Activated T-helper 1 cell treated with anti-CD3 and anti-CD28 coated beads, Interleukin-12 subunit alpha, Interleukin-12 subunit beta, Interleukin-2, Interleukin-4 antibody, amounts not matched to agents 30 ng/mL and 10 ng/mL and 1 ng/mL, durations not matched to agents 14 hours and 24 hours and 36 hours (primary cell): ENCODE measurements at regions of chr10 and their contacts with region 1.

Region 1: GRCh38 chr10:62811159-62811875 is 4.8 kb downstream of the EGR2 start:
- DNase-seq: peak; percentile 71
- H3K4me3 Mint-ChIP-seq: peak overlapping the region; percentile 98
- H3K27ac Mint-ChIP-seq: peak overlapping the region; percentile 94
- H3K4me1 Mint-ChIP-seq: peaks cover 84% of the 10 kb centered on the region
- H3K27me3 Mint-ChIP-seq: peaks cover 8% of the 10 kb centered on the region

Region 2: DNA sequence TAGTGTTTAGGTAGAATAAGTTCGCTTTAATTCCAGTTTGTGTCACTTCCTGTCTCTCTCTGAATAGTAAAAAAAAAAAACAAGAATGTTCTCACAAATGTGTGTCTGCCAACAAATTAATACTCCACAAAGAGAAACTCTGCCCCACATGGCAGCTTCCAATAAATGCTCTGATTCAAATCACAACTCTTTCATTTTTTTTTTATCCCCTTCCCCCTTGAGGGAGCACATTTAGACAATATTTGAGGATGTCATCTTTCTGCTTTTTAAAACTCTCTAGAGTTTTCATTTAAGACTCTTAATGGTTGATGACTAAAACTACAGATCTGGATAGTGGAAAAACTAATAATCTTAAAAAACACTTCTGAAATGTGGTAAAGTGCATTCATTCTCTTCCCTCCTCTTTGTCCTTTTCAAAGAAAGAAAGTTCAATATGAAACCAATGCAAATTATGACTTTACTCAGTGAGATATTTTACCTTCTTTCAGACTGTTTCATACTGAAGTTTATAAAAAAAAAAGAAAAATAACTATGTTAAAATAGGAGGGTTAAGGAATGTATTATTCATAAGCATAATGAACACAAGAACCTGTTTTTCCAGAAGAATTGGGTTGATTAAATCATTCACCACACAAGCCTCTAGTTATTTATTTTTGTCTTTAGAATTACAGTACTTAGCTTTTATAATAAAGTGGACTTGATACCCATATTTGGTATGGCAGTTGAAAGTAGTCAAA is 867.5 kb before region 1 on chr10:
- intact Hi-C with region 1: loop called (anchors 5 kb)
- DNase-seq: no peak
- H3K4me3 Mint-ChIP-seq: peak overlapping the region; percentile 77
- H3K27ac Mint-ChIP-seq: peak overlapping the region; percentile 95
- H3K4me1 Mint-ChIP-seq: peaks cover 58% of the 10 kb centered on the region
- H3K27me3 Mint-ChIP-seq: no peaks in the 10 kb centered on the region

Region 3: GRCh38 chr10:62610649-62611229 is 200.6 kb before region 1 on chr10:
- intact Hi-C with region 1: loop called (anchors 1 kb)
- DNase-seq: peak; percentile 65
- H3K4me3 Mint-ChIP-seq: no peak overlapping the region
- H3K27ac Mint-ChIP-seq: peak overlapping the region; percentile 11
- H3K4me1 Mint-ChIP-seq: peaks cover 59% of the 10 kb centered on the region
- H3K27me3 Mint-ChIP-seq: peaks cover 9% of the 10 kb centered on the region

Region 4: GRCh38 chr10:62681211-62681940 is 129.9 kb before region 1 on chr10:
- intact Hi-C with region 1: loop called (anchors 1 kb)
- DNase-seq: peak; percentile 80
- H3K4me3 Mint-ChIP-seq: peak overlapping the region; percentile 69
- H3K27ac Mint-ChIP-seq: peak overlapping the region; percentile 95
- H3K4me1 Mint-ChIP-seq: peaks cover 77% of the 10 kb centered on the region
- H3K27me3 Mint-ChIP-seq: no peaks in the 10 kb centered on the region

Region 5: DNA sequence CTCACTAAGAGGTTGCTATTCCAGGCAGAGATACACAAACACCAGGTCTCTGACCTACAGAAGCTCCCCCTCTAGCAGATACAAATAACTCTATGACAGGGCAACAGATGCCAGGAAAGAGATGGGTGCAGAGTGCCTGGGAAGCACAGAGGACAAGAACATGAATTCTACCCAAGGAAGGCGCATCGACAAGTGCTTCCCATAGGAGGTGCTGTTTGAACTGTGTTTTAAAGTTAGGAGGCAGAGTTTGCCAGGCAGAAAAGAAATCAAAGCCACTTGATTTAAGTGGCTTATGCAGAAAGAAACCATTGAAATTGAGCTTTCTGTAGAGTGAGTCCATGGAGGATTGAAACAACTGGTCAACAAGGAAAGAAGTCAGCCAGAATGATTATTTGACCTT is 40.1 kb after region 1 on chr10:
- intact Hi-C with region 1: loop called (anchors 1 kb)
- DNase-seq: no peak
- H3K4me3 Mint-ChIP-seq: no peak overlapping the region
- H3K27ac Mint-ChIP-seq: peak overlapping the region; percentile 9
- H3K4me1 Mint-ChIP-seq: peaks cover 51% of the 10 kb centered on the region
- H3K27me3 Mint-ChIP-seq: peaks cover 5% of the 10 kb centered on the region

Region 6: DNA sequence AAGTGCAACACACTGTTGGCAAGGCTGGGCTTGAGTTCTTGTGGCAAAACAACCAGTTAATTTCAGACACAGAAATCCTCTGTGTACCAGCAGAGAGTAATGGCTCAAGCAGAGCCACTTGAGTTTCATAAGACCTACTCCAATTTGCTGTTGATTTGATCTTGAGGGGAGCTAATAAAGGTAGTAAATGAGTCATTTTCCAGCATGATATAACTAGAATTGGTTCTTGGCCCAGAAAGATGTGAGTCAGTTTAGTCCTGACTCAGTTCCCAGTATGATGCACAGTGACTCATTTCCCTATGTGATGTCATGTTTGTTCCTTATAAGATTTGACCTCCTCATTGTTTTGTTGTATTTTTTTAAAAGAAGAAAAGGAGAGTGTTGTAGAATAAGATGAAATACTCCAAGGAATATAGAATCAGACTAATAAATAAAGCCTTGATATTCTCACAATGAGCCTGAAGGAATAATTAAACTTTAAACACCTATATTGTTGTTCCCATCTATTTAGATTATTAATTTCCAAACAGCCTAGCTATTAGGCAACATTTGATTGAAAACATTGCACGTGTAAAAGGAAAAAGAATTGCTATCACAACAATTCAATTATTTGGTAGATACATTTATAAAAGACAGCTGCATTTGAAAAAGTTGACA is 896.1 kb after region 1 on chr10:
- intact Hi-C with region 1: loop called (anchors 1 kb)
- DNase-seq: peak; percentile 19
- H3K4me3 Mint-ChIP-seq: peak overlapping the region; percentile 3
- H3K27ac Mint-ChIP-seq: peak overlapping the region; percentile 61
- H3K4me1 Mint-ChIP-seq: peaks cover 22% of the 10 kb centered on the region
- H3K27me3 Mint-ChIP-seq: no peaks in the 10 kb centered on the region